A673 (cell line): ENCODE measurements at regions of chr17 and their contacts with region 1.

Region 1: DNA sequence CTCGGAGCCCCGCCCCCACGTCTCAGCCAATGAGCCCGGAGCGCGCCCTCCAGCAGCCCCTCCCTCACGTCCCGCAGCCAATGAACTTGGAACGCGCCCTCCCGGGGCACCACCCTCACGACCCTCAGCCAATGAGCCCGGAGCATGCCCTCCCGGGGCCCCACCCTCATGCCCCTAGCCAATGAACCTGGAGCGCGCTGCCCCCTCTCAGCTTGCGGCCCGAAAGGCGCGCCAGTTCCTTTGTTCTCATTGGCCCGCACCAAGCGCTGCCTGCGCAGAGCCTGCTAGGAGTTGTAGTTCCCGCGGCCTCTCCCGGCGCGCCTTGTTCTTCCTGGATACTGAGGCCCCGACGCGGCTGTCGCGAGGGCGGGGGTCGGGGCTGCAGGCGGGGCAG is at the start of gene LRRC45:
- DNase-seq: peak; percentile 100
- H3K4me3 ChIP-seq: peak within 1 kb of the TSS; percentile 97
- H3K27ac ChIP-seq: peak within 1 kb of the TSS; percentile 75
- H3K4me1 ChIP-seq: peaks cover 20% of the 10 kb centered on the region
- H3K27me3 ChIP-seq: no peaks in the 10 kb centered on the region
- CTCF ChIP-seq: no peak
- total RNA-seq, gene LRRC45: 34.3 and 37.8 TPM in 2 replicates

Region 2: GRCh38 chr17:81833160-81833920 is 189.6 kb before region 1 on chr17 and contains the start of gene MCRIP1:
- CTCF ChIA-PET with region 1: no interaction called
- POLR2A ChIA-PET with region 1: no interaction called
- intact Hi-C with region 1: no loop called
- DNase-seq: peak; percentile 97
- H3K4me3 ChIP-seq: peak within 1 kb of the TSS; percentile 86
- H3K27ac ChIP-seq: peak within 1 kb of the TSS; percentile 98
- H3K4me1 ChIP-seq: peaks cover 9% of the 10 kb centered on the region
- H3K27me3 ChIP-seq: no peaks in the 10 kb centered on the region
- CTCF ChIP-seq: no peak
- total RNA-seq, gene MCRIP1: 126 and 130 TPM in 2 replicates

Region 3: GRCh38 chr17:81959362-81960129 is 63.4 kb before region 1 on chr17:
- CTCF ChIA-PET with region 1: interaction called, 23 read pairs
- POLR2A ChIA-PET with region 1: no interaction called
- intact Hi-C with region 1: loop called (anchors 5 kb)
- DNase-seq: peak; percentile 65
- H3K4me3 ChIP-seq: peak overlapping the region; percentile 31
- H3K27ac ChIP-seq: no peak overlapping the region
- H3K4me1 ChIP-seq: no peaks in the 10 kb centered on the region
- H3K27me3 ChIP-seq: peaks cover 48% of the 10 kb centered on the region
- CTCF ChIP-seq: peak; percentile 58

Region 4: DNA sequence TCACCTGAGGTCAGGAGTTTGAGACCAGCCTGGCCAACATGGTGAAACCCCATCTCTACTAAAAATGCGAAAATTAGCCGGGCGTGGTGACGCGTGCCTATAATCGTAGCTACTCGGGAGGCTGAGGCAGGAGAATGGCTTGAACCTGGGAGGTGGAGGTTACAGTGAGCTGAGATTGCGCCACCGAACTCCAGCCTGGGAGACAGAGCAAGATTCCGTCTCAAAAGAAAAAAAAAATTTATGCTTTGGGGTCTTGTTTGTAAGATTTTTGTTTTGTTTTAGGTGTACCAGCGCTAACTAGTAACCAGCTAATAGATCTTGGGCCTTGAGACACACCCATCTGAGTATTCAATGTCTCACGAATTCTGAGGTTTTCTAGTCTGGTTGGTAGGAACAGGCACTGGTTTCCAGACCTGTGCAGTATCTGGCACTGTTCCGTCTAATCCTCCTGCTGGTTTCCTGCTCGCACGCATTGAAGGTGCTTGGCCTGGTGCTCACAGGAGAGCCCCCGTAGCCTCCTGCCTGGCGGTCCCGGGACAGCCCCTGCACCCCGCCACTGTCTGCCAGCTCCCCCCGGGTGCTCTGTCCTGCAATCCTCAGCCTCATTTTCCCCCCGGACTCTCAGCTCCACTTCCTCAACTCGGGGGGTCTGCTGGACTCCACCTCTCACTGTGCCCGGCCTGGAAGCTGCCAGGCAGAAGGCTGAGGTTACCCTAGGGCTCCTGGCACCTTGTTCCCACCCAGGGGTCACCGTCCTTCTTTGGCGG is 53.2 kb after region 1 on chr17:
- CTCF ChIA-PET with region 1: no interaction called
- POLR2A ChIA-PET with region 1: interaction called, 23 read pairs
- intact Hi-C with region 1: no loop called
- DNase-seq: no peak
- H3K4me3 ChIP-seq: no peak overlapping the region
- H3K27ac ChIP-seq: peak overlapping the region; percentile 42
- H3K4me1 ChIP-seq: no peaks in the 10 kb centered on the region
- H3K27me3 ChIP-seq: no peaks in the 10 kb centered on the region
- CTCF ChIP-seq: no peak